MCF 10A (cell line): ENCODE measurements at regions of chr2 and their contacts with region 1.

Region 1: DNA sequence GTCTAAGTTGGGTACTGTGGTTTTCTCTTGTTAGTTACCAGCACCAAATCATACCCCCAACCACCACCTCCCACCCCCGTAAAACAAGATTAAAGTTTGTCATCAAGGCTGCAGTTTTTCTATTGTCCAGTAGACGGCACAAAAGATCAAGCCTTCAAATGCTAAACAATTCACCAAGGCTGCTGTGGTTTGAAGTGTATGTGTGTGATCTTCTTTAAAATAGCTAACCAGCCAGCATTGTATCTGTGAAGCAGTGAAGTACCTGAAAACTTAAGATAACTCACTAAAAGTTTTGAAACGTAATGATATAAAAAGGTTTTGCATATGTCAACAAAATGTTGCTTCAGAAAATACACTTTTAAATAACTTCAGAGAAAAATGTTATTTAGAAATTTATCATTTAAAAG is 5.9 kb upstream of the MEIS1 start:
- DNase-seq: peak; percentile 71
- H3K4me3 Mint-ChIP-seq: no peak overlapping the region
- H3K27ac Mint-ChIP-seq: no peak overlapping the region
- H3K4me1 Mint-ChIP-seq: no peaks in the 10 kb centered on the region
- H3K27me3 Mint-ChIP-seq: peaks cover 11% of the 10 kb centered on the region
- CTCF ChIP-seq: peak; percentile 78

Region 2: DNA sequence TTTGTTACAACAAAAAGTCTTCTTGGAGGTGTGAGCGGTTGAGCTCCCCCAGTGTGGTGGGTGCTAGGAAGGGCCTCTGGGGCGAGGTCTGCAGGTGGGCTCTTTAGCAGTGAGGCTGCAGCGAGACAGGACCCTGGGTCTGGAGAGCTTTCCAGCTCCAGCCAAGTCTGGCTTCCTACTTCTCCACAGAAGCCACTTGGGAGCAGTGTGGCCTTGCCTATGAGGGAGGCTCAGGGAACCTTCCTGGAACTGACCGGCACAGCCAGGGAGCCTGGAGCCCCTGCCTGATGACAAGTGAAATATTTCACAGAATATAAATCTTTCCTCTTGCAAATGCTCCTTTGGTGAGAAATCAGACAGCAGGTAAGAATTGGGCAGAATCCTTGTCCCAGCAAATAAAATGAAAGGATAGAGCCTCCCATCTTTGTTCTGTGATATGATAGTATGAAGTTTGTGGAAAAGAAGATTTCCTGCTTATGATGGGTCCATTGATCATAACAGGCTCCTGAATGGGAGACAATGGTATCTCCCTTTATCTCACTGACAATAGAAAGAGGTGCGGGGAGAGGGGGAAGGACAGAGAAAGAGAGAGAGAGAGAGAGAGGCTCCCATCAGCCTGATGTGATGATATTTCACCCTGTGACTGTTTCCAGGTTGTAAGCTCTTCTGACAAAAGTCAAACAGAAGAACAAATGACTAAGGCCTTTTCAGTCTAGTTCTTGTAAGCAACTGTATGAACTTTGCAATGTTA is 706.9 kb before region 1 on chr2:
- CTCF ChIA-PET with region 1: interaction called, 7 read pairs
- POLR2A ChIA-PET with region 1: interaction called, 5 read pairs
- intact Hi-C with region 1: loop called (anchors 5 kb)
- DNase-seq: peak; percentile 35
- H3K4me3 Mint-ChIP-seq: no peak overlapping the region
- H3K27ac Mint-ChIP-seq: no peak overlapping the region
- H3K4me1 Mint-ChIP-seq: no peaks in the 10 kb centered on the region
- H3K27me3 Mint-ChIP-seq: no peaks in the 10 kb centered on the region
- CTCF ChIP-seq: peak; percentile 44

Region 3: DNA sequence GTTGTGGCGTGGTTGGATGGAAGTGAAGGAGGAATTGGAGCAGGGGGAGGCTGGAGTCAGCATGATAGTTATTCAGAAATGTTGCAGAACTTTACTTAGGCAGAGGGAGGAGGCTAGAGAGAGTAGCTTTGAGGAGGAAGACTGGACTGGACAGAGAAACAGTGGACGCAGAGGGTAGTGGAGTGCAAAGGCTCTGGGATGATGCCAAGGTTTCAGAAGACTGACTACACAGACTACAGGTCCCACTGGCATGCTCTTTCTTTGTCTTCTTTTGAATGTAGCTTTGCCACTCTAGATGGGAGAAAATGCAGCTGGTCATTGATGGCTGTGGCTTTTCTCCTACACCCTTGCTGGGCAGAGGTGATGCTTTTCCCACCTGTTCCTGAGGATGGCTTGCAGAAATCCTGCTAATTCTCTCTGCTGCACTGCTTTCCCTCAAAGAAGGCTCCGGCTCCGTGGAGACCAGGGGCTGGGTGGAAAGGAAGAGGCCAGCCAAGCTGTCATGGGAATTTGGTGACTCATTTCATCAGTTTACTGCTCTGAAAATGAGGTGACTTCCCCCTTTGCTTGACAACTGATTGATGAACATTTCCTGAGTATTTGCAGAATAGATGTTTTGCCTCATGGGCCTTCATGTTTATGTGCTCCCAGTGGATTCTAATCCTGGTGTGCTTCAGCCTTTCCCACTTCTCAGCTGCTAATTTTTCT is 48.2 kb after region 1 on chr2:
- CTCF ChIA-PET with region 1: no interaction called
- POLR2A ChIA-PET with region 1: no interaction called
- intact Hi-C with region 1: no loop called
- DNase-seq: no peak
- H3K4me3 Mint-ChIP-seq: no peak overlapping the region
- H3K27ac Mint-ChIP-seq: no peak overlapping the region
- H3K4me1 Mint-ChIP-seq: no peaks in the 10 kb centered on the region
- H3K27me3 Mint-ChIP-seq: no peaks in the 10 kb centered on the region
- CTCF ChIP-seq: no peak

Region 4: GRCh38 chr2:67215214-67216055 is 786.4 kb after region 1 on chr2:
- CTCF ChIA-PET with region 1: interaction called, 6 read pairs
- POLR2A ChIA-PET with region 1: interaction called, 15 read pairs
- intact Hi-C with region 1: loop called (anchors 1 kb)
- DNase-seq: peak; percentile 76
- H3K4me3 Mint-ChIP-seq: peak overlapping the region; percentile 21
- H3K27ac Mint-ChIP-seq: peak overlapping the region; percentile 32
- H3K4me1 Mint-ChIP-seq: peaks cover 6% of the 10 kb centered on the region
- H3K27me3 Mint-ChIP-seq: no peaks in the 10 kb centered on the region
- CTCF ChIP-seq: peak; percentile 77

Region 5: DNA sequence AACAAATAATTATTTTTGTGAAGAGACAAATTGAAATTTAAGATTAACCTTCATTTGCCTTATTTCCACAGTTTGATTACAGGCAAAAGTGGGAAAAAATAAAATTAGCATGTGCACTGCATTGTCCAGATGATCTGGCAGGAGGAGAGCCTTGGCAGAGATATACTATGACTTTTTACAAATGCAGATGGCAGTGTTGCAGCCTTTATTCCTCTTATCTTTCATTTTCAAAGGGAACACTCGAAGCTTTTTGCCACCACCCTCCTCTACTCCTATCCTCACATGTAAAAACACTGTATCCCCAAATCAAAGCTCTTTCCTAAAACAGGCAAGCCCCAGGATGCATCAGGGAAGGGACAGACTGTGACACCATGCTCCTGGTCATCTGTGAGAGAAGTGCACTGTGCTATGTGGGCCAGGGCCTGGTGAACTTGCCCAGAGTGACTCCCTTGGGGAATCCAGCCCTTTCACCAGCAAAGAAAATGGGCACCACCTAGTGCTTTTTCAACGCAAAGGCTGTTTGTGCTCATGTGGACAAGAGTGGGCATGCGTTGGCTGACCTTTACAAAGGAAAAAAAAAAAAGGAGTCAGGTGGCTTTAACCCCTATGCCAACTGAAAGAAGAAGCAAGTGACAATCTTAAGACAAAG is 893.4 kb after region 1 on chr2:
- CTCF ChIA-PET with region 1: no interaction called
- POLR2A ChIA-PET with region 1: no interaction called
- intact Hi-C with region 1: loop called (anchors 1 kb)
- DNase-seq: peak; percentile 76
- H3K4me3 Mint-ChIP-seq: no peak overlapping the region
- H3K27ac Mint-ChIP-seq: peak overlapping the region; percentile 57
- H3K4me1 Mint-ChIP-seq: peaks cover 6% of the 10 kb centered on the region
- H3K27me3 Mint-ChIP-seq: no peaks in the 10 kb centered on the region
- CTCF ChIP-seq: peak; percentile 44

Region 6: GRCh38 chr2:67840460-67841068 is 1411.5 kb after region 1 on chr2:
- CTCF ChIA-PET with region 1: interaction called, 6 read pairs
- POLR2A ChIA-PET with region 1: no interaction called
- intact Hi-C with region 1: loop called (anchors 1 kb)
- DNase-seq: peak; percentile 73
- H3K4me3 Mint-ChIP-seq: no peak overlapping the region
- H3K27ac Mint-ChIP-seq: no peak overlapping the region
- H3K4me1 Mint-ChIP-seq: peaks cover 7% of the 10 kb centered on the region
- H3K27me3 Mint-ChIP-seq: no peaks in the 10 kb centered on the region
- CTCF ChIP-seq: peak; percentile 90